Activated naive CD4-positive, alpha-beta T cell treated with anti-CD3 and anti-CD28 coated beads for 36 hours (primary cell): ENCODE measurements at regions of chr9 and their contacts with region 1.

Region 1: GRCh38 chr9:35696525-35697215 is 6.9 kb upstream of the TPM2 start:
- DNase-seq: peak; percentile 70
- H3K4me3 Mint-ChIP-seq: no peak overlapping the region
- H3K27ac Mint-ChIP-seq: peak overlapping the region; percentile 51
- H3K4me1 Mint-ChIP-seq: peaks cover 1% of the 10 kb centered on the region
- H3K27me3 Mint-ChIP-seq: no peaks in the 10 kb centered on the region

Region 2: DNA sequence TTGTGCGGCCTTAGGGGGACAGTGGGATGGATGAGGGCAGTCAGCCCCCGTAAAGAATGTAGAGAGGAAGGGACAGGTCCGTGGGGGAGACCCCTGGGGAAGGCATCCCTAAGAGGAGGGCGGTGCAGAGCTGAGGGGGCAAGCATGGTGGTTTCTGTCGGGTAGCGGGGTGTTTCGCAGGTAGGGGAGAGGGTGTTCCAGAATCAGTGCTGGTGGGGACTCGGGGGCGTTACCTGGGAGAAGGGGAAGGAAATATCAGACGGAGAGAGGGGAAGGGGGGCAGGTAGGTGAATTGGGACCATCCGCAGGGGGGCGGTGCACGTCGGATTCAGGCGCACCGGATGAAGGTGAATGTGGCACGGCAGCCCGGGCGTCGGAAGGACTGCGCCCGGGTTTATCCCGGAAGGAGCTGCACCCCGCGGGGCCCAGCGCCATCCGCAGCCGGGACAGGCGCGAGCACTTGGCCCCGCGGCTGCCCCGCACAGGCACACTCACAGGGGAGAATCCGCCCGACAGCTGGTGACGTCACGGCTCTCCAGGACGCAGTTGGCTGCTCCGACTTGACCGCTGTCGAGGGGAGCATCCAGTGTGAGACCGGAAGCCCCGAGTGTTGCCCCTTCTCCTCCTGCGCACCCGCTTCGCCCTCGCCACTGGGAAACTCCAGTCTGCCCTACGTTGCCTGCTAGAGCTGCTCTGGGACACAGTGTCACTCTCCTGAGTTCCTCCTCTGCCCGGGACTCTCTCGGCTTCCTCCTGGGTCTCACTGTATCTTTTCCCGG is 79.8 kb before region 1 on chr9:
- CTCF ChIA-PET with region 1: interaction called, 18 read pairs
- intact Hi-C with region 1: no loop called
- DNase-seq: peak; percentile 79
- H3K4me3 Mint-ChIP-seq: peak overlapping the region; percentile 79
- H3K27ac Mint-ChIP-seq: peak overlapping the region; percentile 47
- H3K4me1 Mint-ChIP-seq: peaks cover 28% of the 10 kb centered on the region
- H3K27me3 Mint-ChIP-seq: no peaks in the 10 kb centered on the region

Region 3: DNA sequence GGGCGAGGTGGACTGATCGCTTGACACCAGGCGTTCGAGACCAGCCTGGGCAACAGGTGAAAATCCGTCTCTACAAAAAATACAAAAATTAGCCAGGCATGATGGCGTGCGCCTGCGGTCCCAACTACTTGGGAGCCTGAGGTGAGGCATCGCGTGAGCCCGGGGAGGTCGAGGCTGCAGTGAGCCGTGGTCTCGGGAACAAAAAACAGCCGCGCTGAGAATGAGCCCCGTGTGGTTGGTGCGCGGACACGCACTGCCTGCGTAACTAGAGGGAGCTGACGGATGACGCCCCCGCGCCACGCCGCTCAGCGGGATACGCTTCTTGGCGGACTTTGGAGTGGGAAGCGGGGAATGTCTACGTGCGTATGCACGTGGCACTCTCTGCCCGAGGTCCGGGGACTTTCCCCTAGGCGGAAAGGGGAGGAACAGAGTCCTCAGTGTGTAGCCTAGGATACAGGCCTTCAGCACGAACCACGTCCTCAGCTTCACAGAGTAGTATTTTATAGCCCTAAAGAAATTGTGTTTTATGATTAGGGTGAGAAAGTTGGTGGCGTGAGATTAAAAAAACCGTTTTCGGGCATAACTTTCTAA is 39.0 kb before region 1 on chr9 and contains the start of gene RMRP:
- CTCF ChIA-PET with region 1: interaction called, 45 read pairs
- intact Hi-C with region 1: no loop called
- DNase-seq: peak; percentile 93
- H3K4me3 Mint-ChIP-seq: peak within 1 kb of the TSS; percentile 84
- H3K27ac Mint-ChIP-seq: peak within 1 kb of the TSS; percentile 94
- H3K4me1 Mint-ChIP-seq: peaks cover 60% of the 10 kb centered on the region
- H3K27me3 Mint-ChIP-seq: peaks cover 3% of the 10 kb centered on the region
- total RNA-seq, gene RMRP: 7,381 to 12,571 TPM

Region 4: GRCh38 chr9:35675732-35676392 is 20.8 kb before region 1 on chr9:
- CTCF ChIA-PET with region 1: interaction called, 86 read pairs
- intact Hi-C with region 1: no loop called
- DNase-seq: peak; percentile 72
- H3K4me3 Mint-ChIP-seq: peak overlapping the region; percentile 68
- H3K27ac Mint-ChIP-seq: no peak overlapping the region
- H3K4me1 Mint-ChIP-seq: peaks cover 11% of the 10 kb centered on the region
- H3K27me3 Mint-ChIP-seq: peaks cover 7% of the 10 kb centered on the region

Region 5: DNA sequence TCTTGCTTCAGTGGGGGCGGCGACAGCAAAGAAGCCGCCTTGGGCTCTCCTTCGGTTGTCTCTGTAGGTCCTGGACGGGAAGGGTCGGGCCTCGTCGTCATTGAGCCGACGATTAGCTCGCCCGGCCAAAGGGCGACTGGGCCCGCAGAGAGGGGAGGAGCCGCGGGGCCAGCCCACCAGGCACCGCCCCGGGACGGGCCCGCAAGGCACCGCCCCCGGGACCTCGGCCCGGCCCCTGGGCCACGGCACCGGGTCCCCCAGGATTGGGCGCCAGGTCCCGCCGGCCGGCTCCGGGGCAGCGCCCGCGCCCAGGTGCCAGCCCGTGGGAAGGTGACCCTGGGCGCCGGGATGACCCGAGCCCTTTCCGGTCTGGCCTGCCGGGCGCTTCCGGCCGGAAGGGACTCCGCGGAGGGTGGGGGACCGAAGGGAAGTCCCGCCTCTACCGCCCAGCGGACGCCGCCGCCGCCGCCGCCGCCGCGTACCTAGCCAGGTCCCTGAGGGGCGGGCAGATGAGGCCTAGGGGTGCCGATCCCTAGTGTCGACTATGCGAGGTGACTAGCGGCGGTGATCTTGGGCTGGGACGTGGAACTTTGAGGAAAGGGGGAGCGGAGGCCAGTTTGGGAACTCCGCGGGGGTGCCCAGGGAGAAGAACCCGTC is 52.3 kb after region 1 on chr9 and contains the starts of genes GBA2 and RGP1:
- CTCF ChIA-PET with region 1: interaction called, 10 read pairs
- intact Hi-C with region 1: no loop called
- DNase-seq: peak; percentile 67
- H3K4me3 Mint-ChIP-seq: peak within 1 kb of the TSS; percentile 89
- H3K27ac Mint-ChIP-seq: peak within 1 kb of the TSS; percentile 88
- H3K4me1 Mint-ChIP-seq: peaks cover 32% of the 10 kb centered on the region
- H3K27me3 Mint-ChIP-seq: no peaks in the 10 kb centered on the region
- total RNA-seq, gene GBA2: 20.3 to 22.7 TPM
- total RNA-seq, gene RGP1: 12.0 to 13.3 TPM